Mammary epithelial cell (primary cell): ENCODE measurements at regions of chr5 and their contacts with region 1.

Region 1: GRCh38 chr5:159838551-159839222 is 77.6 kb upstream of the ADRA1B start:
- DNase-seq: peak; percentile 89
- H3K4me3 ChIP-seq: no peak overlapping the region
- H3K27ac ChIP-seq: peak overlapping the region; percentile 34
- H3K4me1 ChIP-seq: peaks cover 30% of the 10 kb centered on the region
- H3K27me3 ChIP-seq: no peaks in the 10 kb centered on the region
- CTCF ChIP-seq: no peak

Region 2: GRCh38 chr5:159826351-159827214 is 12.1 kb before region 1 on chr5:
- CTCF ChIA-PET with region 1: no interaction called
- dilution Hi-C with region 1: no loop called
- in situ Hi-C with region 1: no loop called
- intact Hi-C with region 1: loop called (anchors 1 kb)
- DNase-seq: peak; percentile 86
- H3K4me3 ChIP-seq: no peak overlapping the region
- H3K27ac ChIP-seq: no peak overlapping the region
- H3K4me1 ChIP-seq: peaks cover 31% of the 10 kb centered on the region
- H3K27me3 ChIP-seq: no peaks in the 10 kb centered on the region
- CTCF ChIP-seq: no peak

Region 3: GRCh38 chr5:159850160-159850559 is 11.5 kb after region 1 on chr5:
- CTCF ChIA-PET with region 1: no interaction called
- dilution Hi-C with region 1: no loop called
- in situ Hi-C with region 1: no loop called
- intact Hi-C with region 1: loop called (anchors 1 kb)
- DNase-seq: peak; percentile 90
- H3K4me3 ChIP-seq: no peak overlapping the region
- H3K27ac ChIP-seq: peak overlapping the region; percentile 49
- H3K4me1 ChIP-seq: peaks cover 25% of the 10 kb centered on the region
- H3K27me3 ChIP-seq: no peaks in the 10 kb centered on the region
- CTCF ChIP-seq: no peak